GM12878 (cell line): ENCODE measurements at regions of chr19 and their contacts with region 1.

Region 1: DNA sequence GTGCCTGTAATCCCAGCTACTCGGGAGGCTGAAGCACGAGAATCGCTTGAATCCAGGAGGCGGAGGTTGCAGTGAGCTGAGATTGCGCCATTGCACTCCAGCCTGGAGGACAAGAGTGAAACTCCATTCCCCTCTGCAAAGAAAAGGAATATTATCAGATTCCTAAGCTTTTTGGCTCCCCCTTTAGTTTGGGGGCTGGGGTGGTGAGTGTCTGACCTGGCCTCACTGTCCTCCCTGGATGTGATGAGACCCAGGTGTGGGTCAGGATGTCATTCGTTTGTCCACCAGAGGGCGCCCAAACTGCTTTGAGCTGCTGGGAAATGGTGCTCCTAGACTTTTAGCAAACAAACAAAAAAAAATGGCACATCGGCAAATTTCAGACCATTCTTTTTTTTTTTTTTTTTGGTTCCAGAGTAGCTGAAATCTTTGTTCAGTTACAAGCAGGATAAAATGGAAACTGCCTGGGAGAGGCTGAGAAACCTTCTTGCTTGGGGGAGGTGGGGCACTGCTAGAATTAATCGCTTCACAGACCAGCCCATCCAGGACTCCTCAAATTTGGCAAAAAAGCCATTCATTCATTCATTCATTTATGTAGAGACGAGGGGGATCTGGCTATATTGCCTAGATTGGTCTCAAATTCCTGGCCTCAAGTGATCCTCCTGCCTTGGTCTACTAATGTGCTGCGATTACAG is 29.4 kb downstream of the SPC24 start:
- DNase-seq: no peak
- ATAC-seq: peak; percentile 86
- H3K4me3 ChIP-seq: no peak overlapping the region
- H3K27ac ChIP-seq: no peak overlapping the region
- H3K4me1 ChIP-seq: no peaks in the 10 kb centered on the region
- H3K27me3 ChIP-seq: no peaks in the 10 kb centered on the region
- CTCF ChIP-seq: peak; percentile 75 to 80 (median 78)
- EP300 ChIP-seq: no peak
- POLR2A ChIP-seq: no peak
- RAD21 ChIP-seq: peak; percentile 49

Region 2: GRCh38 chr19:10891405-10892086 is 234.6 kb before region 1 on chr19:
- CTCF ChIA-PET with region 1: no interaction called
- POLR2A ChIA-PET with region 1: no interaction called
- RAD21 ChIA-PET with region 1: no interaction called
- SMC1A ChIA-PET with region 1: no interaction called
- in situ Hi-C with region 1: no loop called
- intact Hi-C with region 1: no loop called
- DNase-seq: no peak
- ATAC-seq: no peak
- H3K4me3 ChIP-seq: no peak overlapping the region
- H3K27ac ChIP-seq: no peak overlapping the region
- H3K4me1 ChIP-seq: peaks cover 22% of the 10 kb centered on the region
- H3K27me3 ChIP-seq: no peaks in the 10 kb centered on the region
- CTCF ChIP-seq: no peak
- EP300 ChIP-seq: no peak
- POLR2A ChIP-seq: no peak
- RAD21 ChIP-seq: no peak

Region 3: GRCh38 chr19:10998045-10998533 is 128.1 kb before region 1 on chr19:
- CTCF ChIA-PET with region 1: no interaction called
- POLR2A ChIA-PET with region 1: no interaction called
- RAD21 ChIA-PET with region 1: no interaction called
- SMC1A ChIA-PET with region 1: no interaction called
- in situ Hi-C with region 1: no loop called
- intact Hi-C with region 1: no loop called
- DNase-seq: no peak
- ATAC-seq: no peak
- H3K4me3 ChIP-seq: no peak overlapping the region
- H3K27ac ChIP-seq: no peak overlapping the region
- H3K4me1 ChIP-seq: no peaks in the 10 kb centered on the region
- H3K27me3 ChIP-seq: no peaks in the 10 kb centered on the region
- CTCF ChIP-seq: no peak
- EP300 ChIP-seq: no peak
- POLR2A ChIP-seq: no peak
- RAD21 ChIP-seq: no peak

Region 4: DNA sequence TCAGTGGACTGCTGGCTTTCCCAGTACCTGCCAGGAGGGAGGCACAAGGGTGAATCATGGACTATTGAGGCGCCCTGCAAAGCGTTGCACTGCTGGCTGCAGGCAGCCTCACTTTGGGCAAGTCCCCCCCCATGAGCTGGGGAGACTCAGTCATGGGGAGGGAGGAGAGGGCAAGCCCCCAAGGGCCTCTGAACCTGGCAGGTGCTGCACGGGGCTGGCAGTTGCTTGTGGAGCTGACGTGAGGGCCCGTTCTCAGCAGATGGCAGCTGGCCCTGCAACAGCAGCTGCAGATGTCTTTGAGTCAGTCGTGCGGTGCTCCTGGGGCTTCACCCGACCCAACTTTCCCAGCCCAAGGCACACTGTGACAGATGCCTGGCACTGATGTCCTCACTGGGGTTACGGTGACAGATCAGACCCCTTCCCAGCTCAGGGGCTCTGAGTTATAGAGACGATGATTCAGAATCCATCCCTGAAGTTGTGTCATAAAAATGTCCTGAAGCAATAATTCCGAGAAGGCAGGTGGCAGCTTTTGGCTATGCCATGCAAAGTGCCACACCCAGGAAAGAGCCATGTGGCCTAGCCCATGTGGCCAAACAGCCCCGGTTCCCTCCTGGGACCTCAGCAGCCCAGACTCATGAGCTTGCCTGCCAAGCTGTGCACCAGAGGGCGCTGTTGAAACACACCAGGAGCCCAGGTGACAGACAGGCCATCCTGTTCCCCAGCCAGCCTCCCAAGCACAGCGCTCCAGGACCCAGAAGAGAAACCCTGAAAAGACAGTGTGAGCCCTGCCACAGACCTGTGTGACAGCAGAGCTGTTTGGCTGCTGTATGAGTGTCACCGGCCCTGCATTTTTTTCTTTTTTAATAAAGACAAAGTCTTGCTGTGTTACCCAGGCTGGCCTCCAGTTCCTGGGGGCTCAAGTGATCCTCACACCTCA is 90.4 kb before region 1 on chr19:
- CTCF ChIA-PET with region 1: interaction called, 20 read pairs
- POLR2A ChIA-PET with region 1: interaction called, 5 read pairs
- RAD21 ChIA-PET with region 1: interaction called, 14 read pairs
- SMC1A ChIA-PET with region 1: interaction called, 5 read pairs
- in situ Hi-C with region 1: no loop called
- intact Hi-C with region 1: loop called (anchors 1 kb)
- DNase-seq: peak; percentile 71
- ATAC-seq: peak; percentile 99
- H3K4me3 ChIP-seq: no peak overlapping the region
- H3K27ac ChIP-seq: no peak overlapping the region; the same call in 1 of the 2 replicates
- H3K4me1 ChIP-seq: peaks cover 4% of the 10 kb centered on the region; the same call in 1 of the 2 replicates
- H3K27me3 ChIP-seq: no peaks in the 10 kb centered on the region
- CTCF ChIP-seq: peak; percentile 93 to 99 (median 97); a peak in 5 of 6 replicates
- EP300 ChIP-seq: no peak
- POLR2A ChIP-seq: peak; percentile 44; the same call in 1 of the 2 replicates
- RAD21 ChIP-seq: peak; percentile 92

Region 5: DNA sequence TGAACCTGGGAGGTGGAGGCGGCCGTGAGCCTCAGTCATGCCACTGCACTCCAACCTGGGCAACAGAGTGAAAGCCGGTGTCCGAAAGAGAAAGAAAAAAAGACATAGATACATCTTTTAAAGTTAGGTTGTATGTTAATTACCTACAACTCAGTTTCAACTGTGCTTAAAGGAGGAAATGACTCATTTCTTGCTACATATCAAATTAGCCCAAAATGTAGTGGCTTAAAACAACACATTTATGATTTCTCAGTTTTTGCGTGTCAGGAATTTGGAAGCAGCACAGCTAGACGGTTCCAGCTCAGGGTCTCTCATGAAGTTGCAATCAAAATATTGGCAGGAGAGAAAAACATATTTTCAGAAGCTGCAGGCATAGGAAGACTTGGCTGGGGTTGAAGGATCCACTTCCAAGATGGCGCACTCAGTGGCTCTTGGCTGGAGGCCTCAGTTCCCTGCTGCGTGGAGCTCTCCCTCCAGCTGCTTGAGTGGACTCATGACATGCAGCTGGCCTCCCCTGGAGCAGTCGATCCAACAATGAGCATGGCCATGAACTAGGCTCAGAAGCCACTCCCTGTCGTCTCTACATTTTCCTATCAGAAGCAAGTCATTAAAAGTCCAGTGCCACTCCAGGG is 29.8 kb before region 1 on chr19:
- CTCF ChIA-PET with region 1: interaction called, 22 read pairs
- POLR2A ChIA-PET with region 1: no interaction called
- RAD21 ChIA-PET with region 1: interaction called, 3 read pairs
- SMC1A ChIA-PET with region 1: no interaction called
- in situ Hi-C with region 1: no loop called
- intact Hi-C with region 1: no loop called
- DNase-seq: peak; percentile 48
- ATAC-seq: peak; percentile 66
- H3K4me3 ChIP-seq: peak overlapping the region; percentile 50; the same call in 1 of the 2 replicates
- H3K27ac ChIP-seq: peak overlapping the region; percentile 81
- H3K4me1 ChIP-seq: peaks cover 38% of the 10 kb centered on the region
- H3K27me3 ChIP-seq: no peaks in the 10 kb centered on the region
- CTCF ChIP-seq: no peak
- EP300 ChIP-seq: peak; percentile 47 to 55; a peak in 1 of 4 replicates
- POLR2A ChIP-seq: 0 out of 2 replicates have a peak, but pooled peaks have one; percentile 21
- RAD21 ChIP-seq: no peak

Region 6: DNA sequence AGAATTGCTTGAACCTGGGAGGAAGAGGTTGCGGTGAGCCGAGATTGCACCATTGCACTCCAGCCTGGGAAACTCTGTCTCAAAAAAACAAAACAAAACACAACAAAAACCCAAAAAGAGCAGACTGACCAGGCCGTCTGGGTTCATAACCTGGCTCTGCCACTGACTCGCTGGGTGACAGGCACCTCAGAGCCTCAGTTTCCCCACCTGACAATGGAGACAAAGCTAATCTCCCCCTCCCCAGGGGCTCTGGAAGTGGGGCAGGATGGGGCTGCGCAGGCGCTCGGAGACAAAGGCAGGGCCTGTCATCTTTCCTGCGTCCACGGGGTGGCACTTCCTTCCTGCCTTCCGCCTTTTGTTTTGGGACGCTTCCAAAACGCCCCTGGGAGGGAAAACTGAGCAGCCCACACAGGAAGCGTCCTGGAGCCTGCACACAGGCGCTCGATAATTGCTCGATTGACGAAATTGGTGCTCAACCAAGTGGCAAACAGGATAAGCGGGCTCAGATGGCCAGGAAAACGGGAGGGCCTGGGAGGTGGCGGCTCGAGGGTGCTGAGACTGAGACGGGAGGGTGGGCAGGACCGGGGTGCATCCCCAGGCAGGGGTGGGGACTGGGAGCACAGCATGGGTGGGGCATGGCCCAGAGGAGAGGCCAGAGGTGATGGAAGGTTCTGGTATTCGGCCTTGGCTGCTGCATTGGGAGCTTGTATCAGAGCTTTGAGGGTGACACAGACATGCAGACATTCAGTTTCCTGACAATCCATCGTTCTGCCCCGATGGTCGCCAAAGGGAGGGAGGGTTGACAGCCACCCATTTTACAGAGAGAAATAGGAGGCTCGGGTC is 11.6 kb after region 1 on chr19:
- CTCF ChIA-PET with region 1: interaction called, 12 read pairs
- POLR2A ChIA-PET with region 1: no interaction called
- RAD21 ChIA-PET with region 1: no interaction called
- SMC1A ChIA-PET with region 1: no interaction called
- in situ Hi-C with region 1: no loop called
- intact Hi-C with region 1: no loop called
- DNase-seq: no peak
- ATAC-seq: peak; percentile 61
- H3K4me3 ChIP-seq: peak overlapping the region; percentile 29; the same call in 1 of the 2 replicates
- H3K27ac ChIP-seq: no peak overlapping the region
- H3K4me1 ChIP-seq: peaks cover 9% of the 10 kb centered on the region
- H3K27me3 ChIP-seq: no peaks in the 10 kb centered on the region
- CTCF ChIP-seq: peak; percentile 63 to 72 (median 70)
- EP300 ChIP-seq: no peak
- POLR2A ChIP-seq: no peak
- RAD21 ChIP-seq: peak; percentile 80

Region 7: DNA sequence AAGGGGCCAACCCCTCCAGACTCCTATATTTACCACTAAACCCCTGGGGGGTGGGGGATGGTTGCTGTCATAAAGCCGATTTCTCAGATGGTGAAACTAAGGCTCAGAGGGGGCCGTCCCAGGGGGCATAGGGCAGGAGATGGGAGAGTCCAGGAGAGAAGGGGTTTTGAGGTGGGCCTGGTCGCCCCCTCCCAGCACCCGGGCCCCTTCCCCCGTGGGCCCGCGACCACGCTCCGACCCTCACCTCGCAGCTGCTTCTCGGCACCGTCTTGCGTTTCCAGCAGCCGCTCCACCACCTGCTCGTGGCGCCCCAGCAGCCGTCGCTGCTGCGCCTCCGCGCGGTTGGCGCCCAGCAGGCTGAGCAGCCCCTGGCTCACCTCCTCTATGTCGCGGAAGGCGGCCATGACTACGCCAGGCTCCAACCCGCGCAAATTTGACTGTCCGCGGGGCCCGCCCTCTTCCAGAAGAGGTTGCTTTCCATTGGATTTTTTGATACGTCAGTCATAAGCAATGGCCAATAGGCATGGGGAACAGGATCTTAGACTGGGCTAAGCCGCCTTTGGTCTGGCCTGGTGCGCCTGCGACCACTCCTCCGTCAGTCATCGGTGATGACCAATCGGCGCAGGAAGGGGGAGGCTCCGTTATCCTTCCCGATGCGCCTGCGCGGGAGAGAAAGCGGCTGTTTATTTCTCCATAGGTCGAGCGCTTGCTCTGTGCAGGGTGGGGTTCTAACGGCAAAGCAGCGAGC is 29.4 kb after region 1 on chr19 and contains the start of gene SPC24:
- CTCF ChIA-PET with region 1: interaction called, 14 read pairs
- POLR2A ChIA-PET with region 1: no interaction called
- RAD21 ChIA-PET with region 1: interaction called, 3 read pairs
- SMC1A ChIA-PET with region 1: interaction called, 4 read pairs
- in situ Hi-C with region 1: no loop called
- intact Hi-C with region 1: no loop called
- DNase-seq: peak; percentile 94
- ATAC-seq: peak; percentile 99
- H3K4me3 ChIP-seq: peak within 1 kb of the TSS; percentile 95
- H3K27ac ChIP-seq: peak within 1 kb of the TSS; percentile 91
- H3K4me1 ChIP-seq: no peaks in the 10 kb centered on the region; the same call in 1 of the 2 replicates
- H3K27me3 ChIP-seq: no peaks in the 10 kb centered on the region
- CTCF ChIP-seq: 0 out of 6 replicates have a peak, but pooled peaks of 1 of the 3 experiments have one; percentile 3
- EP300 ChIP-seq: no peak
- POLR2A ChIP-seq: peak; percentile 94
- RAD21 ChIP-seq: no peak
- polyA plus RNA-seq, gene SPC24: 9.4 to 18.4 TPM

Region 8: DNA sequence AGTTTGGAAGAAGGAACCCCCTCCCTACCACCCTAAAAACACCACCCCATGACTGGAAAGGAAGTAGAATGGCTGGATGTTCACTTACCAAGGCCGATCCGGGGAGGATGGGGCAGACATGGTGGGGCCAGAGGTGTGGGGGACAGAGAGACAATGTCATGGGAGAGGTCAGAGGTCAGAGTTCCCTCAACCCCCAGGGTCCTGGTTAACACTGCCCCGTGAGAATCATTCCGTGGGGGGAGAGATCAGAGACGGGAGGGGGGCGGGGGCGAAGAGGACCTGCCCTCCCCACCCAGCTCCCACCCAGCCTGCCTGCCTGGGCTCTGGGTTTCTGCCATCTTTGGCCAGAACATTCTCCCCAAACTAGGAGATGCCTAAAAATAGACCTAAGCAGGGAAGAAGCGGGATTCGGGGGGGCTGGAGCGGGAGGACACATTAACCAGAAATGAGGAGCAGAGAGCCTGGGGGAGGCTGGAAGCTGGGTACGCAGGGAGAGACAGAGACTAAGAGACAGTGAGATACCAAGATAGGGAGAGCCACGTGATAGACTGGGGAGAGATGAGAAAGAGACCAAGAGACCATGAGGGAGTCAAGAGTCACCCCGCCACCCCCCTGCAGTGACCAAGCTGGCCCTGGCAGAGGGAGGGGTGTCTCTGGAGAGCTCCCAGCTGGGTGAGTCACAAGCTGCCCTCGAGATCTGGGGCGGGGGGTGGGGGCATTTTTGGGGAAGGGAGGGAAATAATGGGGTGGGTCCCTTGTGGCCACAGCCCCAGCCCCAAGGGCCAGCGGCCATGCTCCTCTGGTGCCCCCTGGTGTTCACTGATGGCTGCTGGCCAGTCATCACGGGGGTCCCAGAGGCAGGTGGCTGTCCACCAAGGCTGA is 77.3 kb after region 1 on chr19:
- CTCF ChIA-PET with region 1: interaction called, 16 read pairs
- POLR2A ChIA-PET with region 1: no interaction called
- RAD21 ChIA-PET with region 1: interaction called, 9 read pairs
- SMC1A ChIA-PET with region 1: interaction called, 7 read pairs
- in situ Hi-C with region 1: no loop called
- intact Hi-C with region 1: loop called (anchors 2 kb)
- DNase-seq: no peak
- ATAC-seq: peak; percentile 71
- H3K4me3 ChIP-seq: no peak overlapping the region
- H3K27ac ChIP-seq: no peak overlapping the region
- H3K4me1 ChIP-seq: peaks cover 11% of the 10 kb centered on the region
- H3K27me3 ChIP-seq: no peaks in the 10 kb centered on the region
- CTCF ChIP-seq: peak; percentile 60 to 93 (median 81)
- EP300 ChIP-seq: no peak
- POLR2A ChIP-seq: no peak
- RAD21 ChIP-seq: peak; percentile 78

Region 9: GRCh38 chr19:11208561-11209471 is 82.7 kb after region 1 on chr19:
- CTCF ChIA-PET with region 1: interaction called, 16 read pairs
- POLR2A ChIA-PET with region 1: no interaction called
- RAD21 ChIA-PET with region 1: interaction called, 9 read pairs
- SMC1A ChIA-PET with region 1: interaction called, 7 read pairs
- in situ Hi-C with region 1: no loop called
- intact Hi-C with region 1: loop called (anchors 2 kb)
- DNase-seq: no peak
- ATAC-seq: no peak
- H3K4me3 ChIP-seq: no peak overlapping the region
- H3K27ac ChIP-seq: no peak overlapping the region
- H3K4me1 ChIP-seq: peaks cover 11% of the 10 kb centered on the region
- H3K27me3 ChIP-seq: no peaks in the 10 kb centered on the region
- CTCF ChIP-seq: no peak
- EP300 ChIP-seq: no peak
- POLR2A ChIP-seq: no peak
- RAD21 ChIP-seq: no peak